Heart right ventricle (tissue), 16 donors: ENCODE measurements at regions of chr1 and their contacts with region 1.

Region 1: DNA sequence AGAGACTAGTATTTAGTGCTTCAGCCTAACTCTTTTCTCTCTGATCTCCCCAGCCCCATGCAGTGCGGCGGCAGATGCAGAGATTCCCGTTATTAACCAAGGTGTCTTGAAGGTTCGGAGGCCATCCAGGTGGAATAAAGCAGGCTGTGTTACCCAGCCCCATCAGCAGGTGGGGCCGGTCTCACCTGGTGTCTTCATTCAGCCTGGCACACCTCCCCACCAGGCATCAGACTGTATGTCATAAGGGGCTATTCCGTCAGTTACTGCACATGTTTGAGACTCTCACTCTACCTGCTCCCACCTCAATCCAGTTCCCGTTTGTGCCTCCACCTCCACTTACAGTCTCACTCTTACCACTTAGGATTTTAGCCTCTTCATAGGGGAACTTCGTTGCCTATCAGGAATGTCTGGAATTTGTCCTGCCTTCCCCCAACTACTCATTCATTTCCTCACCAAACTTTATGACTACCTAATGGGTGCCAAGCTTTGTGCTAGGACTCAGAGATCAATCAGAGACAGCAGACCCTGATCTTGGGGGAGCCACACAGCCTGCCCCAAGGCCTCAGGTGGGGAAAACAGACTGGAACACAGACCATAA is 170.2 kb downstream of the PLPP3 start:
- DNase-seq: peak in 1 of 2 donors; percentile 17
- ATAC-seq: peak in 2 of 8 donors; percentile 22 to 41
- H3K4me3 ChIP-seq: no peak overlapping the region
- H3K27ac ChIP-seq: no peak overlapping the region
- H3K4me1 ChIP-seq: peaks cover 0 to 53% (median 14%) of the 10 kb centered on the region in 9 donors
- H3K27me3 ChIP-seq: no peaks in the 10 kb centered on the region
- CTCF ChIP-seq: peak in 8 of 9 donors; percentile 26 to 54 (median 45)

Region 2: DNA sequence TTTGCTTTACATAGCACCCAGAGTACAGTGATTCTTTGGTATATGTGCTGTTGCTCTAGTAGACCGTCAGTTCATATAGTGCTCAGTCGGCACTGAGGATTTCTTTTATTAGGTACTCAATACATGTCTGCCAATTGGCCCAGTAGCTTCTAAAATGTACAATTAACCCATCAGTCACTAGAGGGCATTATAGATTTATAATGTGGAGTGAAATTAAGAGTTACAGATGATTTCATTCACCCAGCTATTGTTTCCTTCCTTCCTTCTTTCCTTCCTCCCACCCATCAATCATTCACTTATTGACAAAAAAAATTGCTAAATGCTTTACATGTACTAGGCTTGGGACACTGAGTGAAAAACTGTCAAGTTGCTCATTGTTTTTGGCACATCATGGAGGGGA is 930.5 kb before region 1 on chr1:
- intact Hi-C with region 1: loop called in 1 of 10 experiments (anchors 10 kb)
- DNase-seq: no peak
- ATAC-seq: no peak
- H3K4me3 ChIP-seq: no peak overlapping the region
- H3K27ac ChIP-seq: no peak overlapping the region
- H3K4me1 ChIP-seq: peaks cover 0 to 32% (median 12%) of the 10 kb centered on the region in 9 donors
- H3K27me3 ChIP-seq: no peaks in the 10 kb centered on the region
- CTCF ChIP-seq: peak in 6 of 9 donors; percentile 21 to 40 (median 31)

Region 3: DNA sequence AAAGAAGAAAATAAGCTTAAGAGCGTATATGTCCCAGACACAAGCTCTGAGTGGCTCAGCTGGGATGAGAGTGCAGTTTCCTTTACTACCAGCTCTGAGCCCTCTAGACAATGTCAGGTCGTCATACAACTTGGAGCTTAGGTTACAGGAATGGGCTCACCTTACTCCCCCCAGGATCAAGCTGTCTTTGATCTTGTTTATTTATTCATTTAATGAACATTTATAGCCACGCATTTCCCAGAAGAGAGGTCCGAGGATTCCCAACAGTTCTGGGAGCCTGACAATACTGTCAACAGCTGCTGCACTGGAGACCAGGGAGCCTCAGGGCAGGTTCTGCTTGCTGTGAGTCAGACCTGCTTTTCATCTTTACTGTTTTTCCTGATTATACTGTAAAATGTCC is 208.8 kb before region 1 on chr1:
- intact Hi-C with region 1: loop called in 1 of 10 experiments (anchors 2 kb)
- DNase-seq: no peak
- ATAC-seq: no peak
- H3K4me3 ChIP-seq: no peak overlapping the region
- H3K27ac ChIP-seq: no peak overlapping the region
- H3K4me1 ChIP-seq: peaks cover 0 to 50% (median 21%) of the 10 kb centered on the region in 9 donors
- H3K27me3 ChIP-seq: no peaks in the 10 kb centered on the region
- CTCF ChIP-seq: no peak

Region 4: GRCh38 chr1:56291374-56291919 is 117.7 kb before region 1 on chr1:
- intact Hi-C with region 1: loop called in 2 of 10 experiments (anchors 2 to 10 kb)
- DNase-seq: peak; percentile 16 to 40
- ATAC-seq: peak; percentile 67 to 90 (median 80)
- H3K4me3 ChIP-seq: no peak overlapping the region
- H3K27ac ChIP-seq: peak overlapping the region in 7 of 10 donors; percentile 10 to 73 (median 42)
- H3K4me1 ChIP-seq: peaks cover 0 to 39% (median 10%) of the 10 kb centered on the region in 9 donors
- H3K27me3 ChIP-seq: no peaks in the 10 kb centered on the region
- CTCF ChIP-seq: no peak

Region 5: DNA sequence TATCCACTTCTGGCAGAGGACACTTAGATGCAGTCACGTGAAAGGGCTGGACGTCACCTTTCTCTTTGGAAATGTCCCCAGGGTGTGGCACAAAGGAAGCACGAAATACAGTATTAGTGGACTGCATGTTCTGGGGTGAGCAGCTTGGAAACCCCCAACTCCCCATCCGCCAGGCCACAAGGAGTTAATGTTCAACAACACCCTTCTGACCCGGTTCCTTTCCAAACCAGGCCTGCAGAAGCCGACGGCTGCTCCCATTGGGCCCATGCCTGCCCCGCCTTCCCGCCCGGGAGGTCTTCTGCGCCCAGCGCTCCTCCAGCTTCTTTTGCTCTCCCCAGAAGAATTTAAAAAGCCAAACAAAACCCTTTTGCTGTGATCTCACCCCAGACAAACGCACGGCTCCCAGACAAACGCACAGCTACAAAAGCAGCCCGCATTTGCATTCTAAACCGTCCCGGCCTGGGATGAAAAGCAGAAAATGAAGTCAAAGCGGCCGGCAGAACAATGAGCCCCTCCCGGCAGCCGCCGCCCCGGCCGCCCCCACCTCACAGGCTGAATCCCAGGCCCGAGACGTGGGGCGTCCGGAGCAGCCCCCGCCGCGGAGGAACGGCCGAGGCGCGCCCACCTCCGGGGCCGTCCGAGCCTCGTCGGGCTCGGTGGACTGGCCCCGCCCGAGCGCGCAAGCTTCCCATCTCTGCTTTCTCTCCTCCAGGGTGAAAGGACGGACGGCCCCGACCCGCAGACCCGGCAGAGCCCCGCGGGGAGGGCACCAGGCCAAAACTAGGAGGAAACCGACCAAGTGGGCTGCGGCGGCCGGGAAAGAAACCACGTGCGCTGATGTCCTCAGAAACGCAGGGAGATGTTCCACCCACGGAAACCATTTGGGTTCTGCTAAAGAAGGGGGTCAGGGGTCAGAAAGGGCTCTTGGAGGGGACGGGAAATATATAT is 68.2 kb after region 1 on chr1:
- intact Hi-C with region 1: loop called in 1 of 10 experiments (anchors 10 kb)
- DNase-seq: peak; percentile 73 to 79
- ATAC-seq: peak; percentile 83 to 94 (median 89)
- H3K4me3 ChIP-seq: peak overlapping the region; percentile 54 to 79 (median 68)
- H3K27ac ChIP-seq: peak overlapping the region; percentile 72 to 97 (median 92)
- H3K4me1 ChIP-seq: peaks cover 0 to 41% (median 14%) of the 10 kb centered on the region in 9 donors
- H3K27me3 ChIP-seq: peaks cover 0 to 3% (median 0%) of the 10 kb centered on the region in 7 donors
- CTCF ChIP-seq: no peak